A549 (cell line): ENCODE measurements at regions of chr18 and their contacts with region 1.

Region 1: DNA sequence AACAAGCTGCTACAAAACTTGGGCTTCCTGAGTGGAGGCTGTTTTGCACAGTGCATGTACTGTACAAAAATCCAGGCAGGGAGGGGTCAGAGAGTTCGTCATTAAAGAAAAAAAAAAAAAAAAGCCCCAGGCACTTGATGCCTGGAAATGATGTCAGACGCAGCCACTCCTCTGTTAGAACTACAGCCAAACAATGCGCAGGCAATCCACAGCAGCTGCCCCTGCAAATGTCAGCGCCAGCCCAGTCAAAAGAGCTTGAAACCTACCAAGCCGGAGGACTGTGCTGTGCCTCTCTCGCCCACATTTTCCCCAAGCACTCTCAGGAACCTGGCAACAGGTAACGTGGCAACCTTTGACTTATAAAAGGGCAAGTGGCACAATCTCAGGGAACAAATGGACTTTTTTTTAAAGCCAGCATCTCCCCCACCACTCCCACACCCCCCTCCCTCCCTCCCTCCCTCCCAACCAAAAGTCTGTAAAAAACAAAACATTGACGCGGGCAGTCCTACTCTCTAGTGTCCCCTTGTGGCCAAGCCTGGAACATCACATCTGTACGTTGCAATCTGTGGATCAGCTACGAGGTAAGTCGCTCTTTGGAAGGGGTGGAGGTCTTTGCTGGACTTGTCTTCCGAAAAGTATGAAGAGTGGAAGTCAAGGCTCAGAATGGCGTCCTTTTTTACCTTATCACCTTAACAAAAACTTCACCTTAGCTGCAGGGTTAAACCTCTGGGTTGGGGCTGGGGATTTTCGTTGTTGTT is 144.1 kb downstream of the TGIF1 start:
- DNase-seq: peak; percentile 81 to 97
- ATAC-seq: peak; percentile 81 to 91
- H3K4me3 ChIP-seq: peak overlapping the region; percentile 48
- H3K27ac ChIP-seq: peak overlapping the region; percentile 98 to 100
- H3K4me1 ChIP-seq: peaks cover 74% of the 10 kb centered on the region
- CTCF ChIP-seq: peak; percentile 67
- EP300 ChIP-seq: peak; percentile 75 to 79; a peak in 3 of 5 replicates
- POLR2A ChIP-seq: peak; percentile 12; the same call in 1 of the 2 replicates
- RAD21 ChIP-seq: peak; percentile 67 to 70

Region 2: GRCh38 chr18:3321133-3321812 is 272.8 kb before region 1 on chr18:
- CTCF ChIA-PET with region 1: no interaction called
- POLR2A ChIA-PET with region 1: no interaction called
- DNase-seq: peak; percentile 51 to 70
- ATAC-seq: peak; percentile 31 to 59; a peak in 2 of 6 replicates
- H3K4me3 ChIP-seq: no peak overlapping the region
- H3K27ac ChIP-seq: peak overlapping the region; percentile 53 to 78; a peak in 5 of 6 replicates
- H3K4me1 ChIP-seq: peaks cover 50% of the 10 kb centered on the region
- CTCF ChIP-seq: no peak
- EP300 ChIP-seq: peak in 1 of 2 experiments; percentile 34; a peak in 1 of 5 replicates
- POLR2A ChIP-seq: no peak
- RAD21 ChIP-seq: no peak

Region 3: DNA sequence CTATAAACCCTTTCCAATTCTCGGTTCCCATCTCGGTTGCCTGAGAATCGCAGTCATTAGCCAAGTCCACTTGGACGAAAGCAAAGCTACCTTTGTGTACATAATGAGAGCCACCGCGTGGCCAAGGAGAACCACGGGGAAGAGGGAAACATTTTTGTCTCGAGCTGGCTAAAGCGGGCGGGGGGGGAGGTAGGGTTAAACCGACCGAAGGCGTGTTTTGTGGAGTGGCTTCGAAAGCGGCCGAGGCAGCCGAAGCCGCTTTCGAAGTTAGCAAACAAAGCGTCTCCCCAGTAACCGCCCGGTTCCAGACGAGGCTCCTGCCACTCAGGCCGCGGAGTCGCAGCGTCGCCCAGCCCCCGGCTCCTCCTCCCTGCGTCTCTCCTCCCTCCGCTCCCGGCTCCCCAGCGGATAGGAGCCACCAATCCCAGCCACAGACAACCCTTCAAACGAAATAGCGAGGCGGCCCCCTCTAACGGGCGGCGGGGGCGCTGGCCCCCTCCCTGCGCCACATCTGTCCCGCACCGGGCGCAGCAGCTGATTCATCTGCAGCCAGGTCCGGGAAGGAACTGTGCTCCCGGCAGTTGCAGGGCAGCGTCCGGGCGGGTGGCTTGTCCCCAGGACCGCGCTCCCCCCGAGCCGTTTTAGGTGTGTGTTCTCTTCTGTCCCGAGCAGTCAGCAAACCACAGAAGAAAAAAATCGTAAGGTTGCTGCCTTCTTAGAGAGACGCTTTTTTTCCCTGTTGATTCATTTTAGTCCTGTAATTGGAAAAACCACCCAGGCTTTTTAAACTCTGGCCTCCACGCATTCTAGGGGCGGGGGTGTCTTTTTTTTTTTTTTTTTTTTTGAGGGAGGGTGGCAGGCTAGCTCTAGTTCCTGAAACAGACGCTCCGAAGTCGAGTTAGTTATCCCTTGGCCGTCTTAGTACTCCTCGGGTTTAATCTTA is 145.9 kb before region 1 on chr18:
- CTCF ChIA-PET with region 1: interaction called, 16 read pairs
- POLR2A ChIA-PET with region 1: interaction called, 146 read pairs
- DNase-seq: peak; percentile 56 to 95
- ATAC-seq: peak; percentile 76 to 80
- H3K4me3 ChIP-seq: peak overlapping the region; percentile 93
- H3K27ac ChIP-seq: peak overlapping the region; percentile 98 to 100
- H3K4me1 ChIP-seq: peaks cover 25% of the 10 kb centered on the region
- CTCF ChIP-seq: peak; percentile 19; the same call in 1 of the 3 replicates
- EP300 ChIP-seq: peak in 1 of 2 experiments; percentile 27; a peak in 1 of 5 replicates
- POLR2A ChIP-seq: peak; percentile 57
- RAD21 ChIP-seq: peak in 1 of 2 experiments; percentile 31; a peak in 2 of 5 replicates

Region 4: GRCh38 chr18:3454365-3455089 is 139.6 kb before region 1 on chr18:
- CTCF ChIA-PET with region 1: interaction called, 40 read pairs
- POLR2A ChIA-PET with region 1: interaction called, 146 read pairs
- DNase-seq: peak in 1 of 2 experiments; percentile 80
- ATAC-seq: no peak
- H3K4me3 ChIP-seq: peak overlapping the region; percentile 93
- H3K27ac ChIP-seq: peak overlapping the region; percentile 98 to 100
- H3K4me1 ChIP-seq: peaks cover 26% of the 10 kb centered on the region
- CTCF ChIP-seq: peak; percentile 53
- EP300 ChIP-seq: no peak
- POLR2A ChIP-seq: no peak
- RAD21 ChIP-seq: peak; percentile 38 to 54; a peak in 4 of 5 replicates

Region 5: DNA sequence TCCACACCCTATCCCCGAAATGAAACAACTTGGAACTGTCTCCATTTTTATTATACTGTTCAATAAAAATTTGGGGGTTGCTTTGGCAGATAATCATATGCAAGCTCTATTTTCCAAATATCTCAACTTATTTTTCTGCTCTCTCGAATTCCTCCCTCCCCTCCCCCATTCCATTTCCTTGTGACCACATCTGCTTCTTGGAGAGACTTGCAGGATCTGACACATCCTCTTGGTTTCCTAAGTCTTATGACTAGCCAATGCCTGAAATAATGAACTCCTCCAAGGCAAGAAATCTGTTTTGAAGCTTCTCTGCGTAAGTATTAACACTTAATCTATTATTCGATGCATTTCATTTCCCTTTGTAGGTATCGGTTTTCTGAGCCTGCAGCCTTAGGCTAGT is 128.0 kb before region 1 on chr18:
- CTCF ChIA-PET with region 1: interaction called, 40 read pairs
- POLR2A ChIA-PET with region 1: interaction called, 146 read pairs
- DNase-seq: peak in 1 of 2 experiments; percentile 66
- ATAC-seq: peak; percentile 12 to 59; a peak in 4 of 6 replicates
- H3K4me3 ChIP-seq: no peak overlapping the region
- H3K27ac ChIP-seq: peak overlapping the region; percentile 55 to 63
- H3K4me1 ChIP-seq: peaks cover 49% of the 10 kb centered on the region
- CTCF ChIP-seq: no peak
- EP300 ChIP-seq: no peak
- POLR2A ChIP-seq: no peak
- RAD21 ChIP-seq: no peak

Region 6: DNA sequence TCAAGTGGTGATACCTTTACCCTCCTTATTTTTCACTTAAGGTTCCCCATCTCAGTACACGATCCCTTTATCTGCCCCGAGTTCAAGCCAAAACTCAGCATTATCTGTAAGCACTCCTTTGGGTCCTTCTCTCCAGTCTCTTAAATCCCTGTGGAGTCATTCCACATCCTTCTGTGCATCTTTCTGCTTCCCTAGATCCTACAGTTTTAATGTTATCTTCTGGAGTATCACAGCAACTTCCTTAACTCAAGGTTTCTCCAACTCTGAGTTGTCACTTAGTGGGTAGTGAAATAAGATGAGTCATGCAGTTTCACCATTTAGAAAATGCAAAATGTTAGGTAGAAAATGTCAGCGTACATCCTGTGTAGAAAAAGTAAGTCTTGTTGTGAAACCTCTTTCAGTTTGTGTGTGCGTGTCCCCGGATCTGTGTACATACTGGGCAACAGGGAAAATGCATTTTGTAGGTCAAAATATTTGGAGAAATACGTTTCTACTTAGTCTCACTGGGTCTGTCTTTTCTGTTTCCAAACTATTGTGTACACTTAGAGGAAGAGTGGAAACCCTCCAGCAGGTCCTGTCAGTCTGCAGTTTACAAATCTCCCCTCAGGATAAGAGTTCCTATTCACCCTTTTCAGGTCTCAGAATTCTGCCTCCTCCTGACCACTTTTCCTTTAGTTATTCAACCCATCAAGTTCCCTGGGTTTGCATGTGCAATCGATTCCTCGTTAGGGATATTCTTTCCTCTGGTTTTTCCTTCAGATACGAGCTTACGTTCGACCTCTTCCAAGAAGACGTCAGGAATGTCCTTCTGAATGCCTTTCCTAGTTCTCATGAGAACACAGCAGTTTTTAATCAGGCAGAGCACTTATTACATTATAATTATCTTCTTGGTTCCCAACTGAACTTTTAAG is 10.7 kb after region 1 on chr18:
- CTCF ChIA-PET with region 1: interaction called, 12 read pairs
- POLR2A ChIA-PET with region 1: interaction called, 76 read pairs
- DNase-seq: peak in 1 of 2 experiments; percentile 94
- ATAC-seq: peak; percentile 48 to 60
- H3K4me3 ChIP-seq: peak overlapping the region; percentile 46
- H3K27ac ChIP-seq: peak overlapping the region; percentile 99 to 100
- H3K4me1 ChIP-seq: peaks cover 58% of the 10 kb centered on the region
- CTCF ChIP-seq: no peak
- EP300 ChIP-seq: peak; percentile 87 to 95; a peak in 4 of 5 replicates
- POLR2A ChIP-seq: no peak
- RAD21 ChIP-seq: no peak; a peak in 1 of 5 replicates

Region 7: GRCh38 chr18:3623769-3624545 is 29.9 kb after region 1 on chr18:
- CTCF ChIA-PET with region 1: interaction called, 13 read pairs
- POLR2A ChIA-PET with region 1: interaction called, 44 read pairs
- DNase-seq: peak; percentile 69 to 99
- ATAC-seq: peak; percentile 86 to 87
- H3K4me3 ChIP-seq: peak overlapping the region; percentile 32; the same call in 2 of the 3 replicates
- H3K27ac ChIP-seq: peak overlapping the region; percentile 99 to 100
- H3K4me1 ChIP-seq: peaks cover 60% of the 10 kb centered on the region
- CTCF ChIP-seq: no peak
- EP300 ChIP-seq: peak; percentile 95 to 99
- POLR2A ChIP-seq: peak; percentile 42; the same call in 1 of the 2 replicates
- RAD21 ChIP-seq: peak; percentile 20 to 38; a peak in 4 of 5 replicates

Region 8: DNA sequence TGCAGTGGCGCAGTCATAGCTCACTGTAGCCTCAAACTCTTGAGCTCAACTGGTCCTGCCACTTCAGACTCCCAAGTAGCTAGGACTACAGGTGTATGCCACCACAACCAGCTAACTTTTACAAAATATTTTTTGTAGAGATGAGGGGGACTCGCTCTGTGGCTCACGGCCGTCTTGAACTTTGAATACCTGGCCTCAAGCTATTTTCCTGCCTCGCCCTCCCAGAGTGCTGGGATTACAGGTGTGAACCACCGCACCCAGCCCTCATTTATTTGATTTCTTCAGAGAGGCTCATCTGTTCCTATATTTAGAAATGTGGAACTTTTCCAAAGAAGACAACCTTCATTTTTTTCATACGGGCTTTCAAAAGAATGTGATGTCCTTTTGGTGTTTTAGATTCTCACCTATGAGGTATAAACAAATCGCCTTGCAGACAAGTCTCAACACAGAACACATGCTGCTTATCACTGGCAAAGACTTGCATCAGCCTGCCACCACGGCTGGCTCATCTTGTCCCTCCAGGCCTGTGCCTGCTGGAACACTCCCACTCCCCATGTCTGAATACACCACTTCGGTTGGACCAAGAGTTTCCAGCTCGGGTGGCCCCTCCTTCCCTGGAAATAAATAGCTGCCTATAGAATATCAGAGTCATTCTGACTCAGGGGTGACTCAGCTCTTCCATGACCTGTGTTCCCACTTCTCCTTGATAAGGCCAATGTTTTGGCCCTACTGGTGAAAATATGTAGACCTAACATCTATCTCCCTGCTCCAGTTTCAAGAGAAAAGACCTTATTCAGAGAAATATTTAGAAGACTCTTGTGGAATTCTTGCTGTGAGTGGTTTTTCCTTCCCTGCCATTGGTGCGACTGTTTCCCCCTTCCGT is 58.5 kb after region 1 on chr18:
- CTCF ChIA-PET with region 1: interaction called, 7 read pairs
- POLR2A ChIA-PET with region 1: interaction called, 41 read pairs
- DNase-seq: peak; percentile 89 to 99
- ATAC-seq: peak; percentile 86 to 88
- H3K4me3 ChIP-seq: peak overlapping the region; percentile 51
- H3K27ac ChIP-seq: peak overlapping the region; percentile 99 to 100
- H3K4me1 ChIP-seq: peaks cover 63% of the 10 kb centered on the region
- CTCF ChIP-seq: no peak
- EP300 ChIP-seq: peak; percentile 60 to 88; a peak in 3 of 5 replicates
- POLR2A ChIP-seq: peak; percentile 29; the same call in 1 of the 2 replicates
- RAD21 ChIP-seq: peak in 1 of 2 experiments; percentile 5; a peak in 1 of 5 replicates